Natural killer cell (primary cell): ENCODE measurements at regions of chr19 and their contacts with region 1.

Region 1: GRCh38 chr19:1884719-1885334 is 469 bp downstream of the ABHD17A start:
- DNase-seq: peak in 1 of 2 donors; percentile 41
- ATAC-seq: peak in 2 of 3 donors; percentile 1 to 2
- H3K4me3 ChIP-seq: peak overlapping the region; percentile 99
- H3K4me3 Mint-ChIP-seq: peak overlapping the region; percentile 100
- H3K27ac ChIP-seq: peak overlapping the region; percentile 99
- H3K27ac Mint-ChIP-seq: peak overlapping the region; percentile 97 to 99
- H3K4me1 ChIP-seq: peaks cover 54% of the 10 kb centered on the region
- H3K4me1 Mint-ChIP-seq: peaks cover 40 to 43% of the 10 kb centered on the region in 2 donors
- H3K27me3 ChIP-seq: no peaks in the 10 kb centered on the region
- H3K27me3 Mint-ChIP-seq: no peaks in the 10 kb centered on the region
- CTCF ChIP-seq: no peak

Region 2: GRCh38 chr19:1905071-1905862 is 20.4 kb after region 1 on chr19 and contains the starts of genes ADAT3 and SCAMP4:
- intact Hi-C with region 1: loop called (anchors 2 kb)
- DNase-seq: peak; percentile 94 to 99
- ATAC-seq: peak; percentile 94 to 98 (median 96)
- H3K4me3 ChIP-seq: peak within 1 kb of the TSS; percentile 54
- H3K4me3 Mint-ChIP-seq: peak within 1 kb of the TSS; percentile 92
- H3K27ac ChIP-seq: peak within 1 kb of the TSS; percentile 69
- H3K27ac Mint-ChIP-seq: peak within 1 kb of the TSS; percentile 81 to 89
- H3K4me1 ChIP-seq: peaks cover 63% of the 10 kb centered on the region
- H3K4me1 Mint-ChIP-seq: peaks cover 22 to 33% of the 10 kb centered on the region in 2 donors
- H3K27me3 ChIP-seq: no peaks in the 10 kb centered on the region
- H3K27me3 Mint-ChIP-seq: no peaks in the 10 kb centered on the region
- CTCF ChIP-seq: no peak
- total RNA-seq, gene ADAT3: 13.0 to 20.9 (median 13.1) TPM
- total RNA-seq, gene SCAMP4: 43.1 to 53.7 (median 46.9) TPM

Region 3: DNA sequence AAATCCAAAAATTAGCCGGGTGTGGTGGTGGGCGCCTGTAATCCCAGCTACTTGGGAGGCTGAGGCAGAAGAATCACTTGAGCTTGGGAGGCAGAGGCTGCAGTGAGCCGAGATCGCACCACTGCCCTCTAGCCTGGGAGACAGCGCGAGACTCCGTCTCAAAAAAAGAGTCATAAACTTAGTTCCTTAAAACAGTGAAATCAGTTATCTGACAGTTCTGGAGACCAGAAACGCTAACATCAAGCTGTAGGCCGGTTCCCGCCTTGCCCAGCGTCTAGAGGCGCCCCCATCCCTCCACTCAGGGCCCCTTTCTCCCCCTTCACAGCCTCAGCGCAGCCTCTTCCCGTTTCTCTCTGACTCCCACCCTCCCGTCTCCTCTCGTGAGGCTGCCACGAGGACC is 32.3 kb after region 1 on chr19:
- intact Hi-C with region 1: no loop called
- DNase-seq: no peak
- ATAC-seq: no peak
- H3K4me3 ChIP-seq: no peak overlapping the region
- H3K4me3 Mint-ChIP-seq: no peak overlapping the region
- H3K27ac ChIP-seq: no peak overlapping the region
- H3K27ac Mint-ChIP-seq: no peak overlapping the region
- H3K4me1 ChIP-seq: no peaks in the 10 kb centered on the region
- H3K4me1 Mint-ChIP-seq: peaks cover 0 to 7% of the 10 kb centered on the region in 2 donors
- H3K27me3 ChIP-seq: no peaks in the 10 kb centered on the region
- H3K27me3 Mint-ChIP-seq: no peaks in the 10 kb centered on the region
- CTCF ChIP-seq: no peak

Region 4: GRCh38 chr19:1987197-1988187 is 102.7 kb after region 1 on chr19:
- intact Hi-C with region 1: no loop called
- DNase-seq: no peak
- ATAC-seq: no peak
- H3K4me3 ChIP-seq: no peak overlapping the region
- H3K4me3 Mint-ChIP-seq: no peak overlapping the region
- H3K27ac ChIP-seq: no peak overlapping the region
- H3K27ac Mint-ChIP-seq: no peak overlapping the region
- H3K4me1 ChIP-seq: no peaks in the 10 kb centered on the region
- H3K4me1 Mint-ChIP-seq: no peaks in the 10 kb centered on the region
- H3K27me3 ChIP-seq: no peaks in the 10 kb centered on the region
- H3K27me3 Mint-ChIP-seq: no peaks in the 10 kb centered on the region
- CTCF ChIP-seq: no peak